Activated B cell treated with CpG ODN at 0.5 μM for 24 hours (primary cell): ENCODE measurements at regions of chr11 and their contacts with region 1.

Region 1: GRCh38 chr11:10076458-10077141 is 217.4 kb downstream of the SBF2 start:
- DNase-seq: peak; percentile 28
- ATAC-seq: peak; percentile 49
- H3K4me3 Mint-ChIP-seq: no peak overlapping the region
- H3K27ac Mint-ChIP-seq: no peak overlapping the region
- H3K4me1 Mint-ChIP-seq: no peaks in the 10 kb centered on the region
- H3K27me3 Mint-ChIP-seq: no peaks in the 10 kb centered on the region
- CTCF ChIP-seq: no peak

Region 2: DNA sequence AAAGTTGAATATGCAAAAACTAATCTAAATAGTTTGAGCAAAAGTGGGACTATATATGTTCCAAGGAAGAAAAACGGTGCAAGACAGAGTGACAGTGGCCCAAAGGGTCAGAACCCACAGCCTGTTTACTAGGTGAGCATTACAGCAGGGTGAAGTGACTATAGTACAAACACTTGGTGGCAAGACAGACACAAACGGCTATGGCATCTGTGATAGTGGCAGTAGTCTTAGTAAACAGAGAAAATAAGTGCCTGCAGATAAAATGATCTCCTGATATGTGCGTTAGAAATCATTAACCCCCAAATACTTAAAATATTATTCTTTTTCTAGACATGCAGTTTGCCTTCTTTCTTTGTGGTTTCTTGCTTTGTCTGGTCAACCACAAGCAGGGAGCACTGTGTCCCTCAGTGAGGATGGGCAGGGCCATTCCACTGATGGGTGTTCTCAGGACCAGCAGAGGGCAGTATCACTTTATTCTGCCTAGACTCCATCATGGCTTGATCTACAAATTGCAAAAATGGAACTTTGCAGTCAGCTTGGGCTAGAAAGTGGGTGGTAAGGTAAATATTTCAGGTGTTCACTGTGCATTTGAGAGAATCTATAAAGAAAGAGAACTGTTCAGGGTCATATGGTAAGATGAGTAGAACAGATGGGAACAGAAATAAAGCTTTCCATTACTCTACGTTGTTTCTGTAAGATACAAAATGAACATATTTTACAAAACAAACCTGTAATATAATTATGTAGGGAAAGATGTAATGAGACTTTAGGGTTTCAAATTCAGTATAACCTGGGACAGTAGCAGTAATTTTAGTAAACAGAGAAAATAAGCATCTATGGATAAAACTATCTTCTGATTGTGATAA is 214.5 kb before region 1 on chr11:
- CTCF ChIA-PET with region 1: interaction called, 6 read pairs
- POLR2A ChIA-PET with region 1: no interaction called
- intact Hi-C with region 1: loop called (anchors 1 kb)
- DNase-seq: no peak
- ATAC-seq: peak; percentile 82
- H3K4me3 Mint-ChIP-seq: no peak overlapping the region
- H3K27ac Mint-ChIP-seq: no peak overlapping the region
- H3K4me1 Mint-ChIP-seq: peaks cover 31% of the 10 kb centered on the region
- H3K27me3 Mint-ChIP-seq: no peaks in the 10 kb centered on the region
- CTCF ChIP-seq: no peak

Region 3: GRCh38 chr11:10117709-10118351 is 41.2 kb after region 1 on chr11:
- CTCF ChIA-PET with region 1: no interaction called
- POLR2A ChIA-PET with region 1: no interaction called
- intact Hi-C with region 1: no loop called
- DNase-seq: no peak
- ATAC-seq: no peak
- H3K4me3 Mint-ChIP-seq: no peak overlapping the region
- H3K27ac Mint-ChIP-seq: no peak overlapping the region
- H3K4me1 Mint-ChIP-seq: no peaks in the 10 kb centered on the region
- H3K27me3 Mint-ChIP-seq: no peaks in the 10 kb centered on the region
- CTCF ChIP-seq: no peak